K562 (cell line): ENCODE measurements at regions of chrX and their contacts with region 1.

Region 1: DNA sequence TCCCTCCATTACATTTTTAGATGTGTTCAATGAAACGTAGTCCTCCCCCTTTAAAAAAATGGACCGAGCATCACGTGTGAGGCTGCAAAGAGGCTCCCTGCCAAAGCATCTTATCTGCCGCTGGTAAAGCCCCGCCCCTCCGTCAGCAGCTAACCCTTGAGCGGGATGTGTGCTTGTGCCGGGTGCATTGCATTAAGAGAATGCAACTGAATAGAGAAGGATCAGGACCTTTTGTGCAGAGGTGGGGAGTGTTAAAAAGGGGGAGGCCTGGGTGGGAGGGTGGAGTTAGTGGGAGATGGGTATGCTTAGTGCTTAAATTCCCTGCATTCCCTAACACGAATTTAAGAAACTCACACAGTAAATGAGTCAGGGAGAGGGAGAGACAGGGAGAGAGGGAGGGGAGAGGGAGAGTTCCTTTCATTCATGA is 66.0 kb downstream of the TBL1X start:
- DNase-seq: peak; percentile 67 to 85 (median 75)
- ATAC-seq: peak; percentile 97
- H3K4me3 ChIP-seq: no peak overlapping the region
- H3K27ac ChIP-seq: no peak overlapping the region
- H3K4me1 ChIP-seq: peaks cover 13 to 20% of the 10 kb centered on the region in 2 experiments; a peak in 4 of 5 replicates
- H3K27me3 ChIP-seq: no peaks in the 10 kb centered on the region
- CTCF ChIP-seq: no peak
- EP300 ChIP-seq: no peak
- POLR2A ChIP-seq: no peak
- RAD21 ChIP-seq: no peak

Region 2: GRCh38 chrX:9515973-9516538 is 14.8 kb before region 1 on chrX:
- CTCF ChIA-PET with region 1: no interaction called
- POLR2A ChIA-PET with region 1: interaction called, 7 read pairs
- in situ Hi-C with region 1: no loop called
- intact Hi-C with region 1: loop called (anchors 2 kb)
- DNase-seq: peak; percentile 47 to 88 (median 63)
- ATAC-seq: peak; percentile 93
- H3K4me3 ChIP-seq: no peak overlapping the region
- H3K27ac ChIP-seq: peak overlapping the region; percentile 64
- H3K4me1 ChIP-seq: peaks cover 21 to 59% of the 10 kb centered on the region in 2 experiments; a peak in 4 of 5 replicates
- H3K27me3 ChIP-seq: no peaks in the 10 kb centered on the region
- CTCF ChIP-seq: no peak
- EP300 ChIP-seq: peak; percentile 80; the same call in 1 of the 2 replicates
- POLR2A ChIP-seq: no peak
- RAD21 ChIP-seq: no peak

Region 3: DNA sequence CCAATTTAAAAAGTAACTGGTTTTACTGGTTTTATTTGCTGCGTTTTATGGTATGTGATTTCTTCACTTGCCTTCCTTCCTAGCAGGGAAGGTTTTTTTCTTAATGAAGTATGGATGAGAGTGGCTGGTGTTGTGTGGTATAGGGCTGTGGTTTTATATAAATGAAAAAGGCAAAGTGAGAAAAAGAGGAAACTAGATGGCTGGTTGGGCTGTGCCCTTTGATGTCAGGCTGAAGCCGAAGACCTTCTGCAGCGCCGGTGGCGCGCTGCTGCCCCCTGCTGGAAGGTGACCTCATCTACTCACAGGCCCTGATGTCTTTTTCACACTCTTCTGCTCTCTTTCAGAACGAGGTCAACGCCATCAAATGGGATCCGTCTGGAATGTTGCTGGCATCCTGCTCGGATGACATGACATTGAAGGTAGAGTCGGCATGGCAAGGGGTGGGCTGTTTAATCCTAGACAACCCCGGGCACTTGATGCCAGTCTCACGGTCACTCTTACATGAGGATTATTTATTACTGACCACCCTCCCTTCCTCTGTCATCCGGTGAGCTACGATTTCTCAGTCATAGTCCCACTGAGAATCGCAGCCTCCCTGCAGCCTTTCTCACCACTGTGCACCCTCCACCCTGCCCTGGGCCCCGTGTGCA is 178.2 kb after region 1 on chrX:
- CTCF ChIA-PET with region 1: no interaction called
- POLR2A ChIA-PET with region 1: no interaction called
- in situ Hi-C with region 1: no loop called
- intact Hi-C with region 1: no loop called
- DNase-seq: peak; percentile 63 to 80 (median 66)
- ATAC-seq: peak; percentile 97
- H3K4me3 ChIP-seq: no peak overlapping the region
- H3K27ac ChIP-seq: no peak overlapping the region
- H3K4me1 ChIP-seq: no peaks in the 10 kb centered on the region
- H3K27me3 ChIP-seq: no peaks in the 10 kb centered on the region
- CTCF ChIP-seq: peak; percentile 68 to 79 (median 73)
- EP300 ChIP-seq: no peak
- POLR2A ChIP-seq: no peak
- RAD21 ChIP-seq: peak; percentile 70 to 76